Mammary epithelial cell (primary cell): ENCODE measurements at regions of chr3 and their contacts with region 1.

Region 1: GRCh38 chr3:100159331-100160153 is 45.2 kb upstream of the FILIP1L start:
- DNase-seq: peak; percentile 14
- H3K4me3 ChIP-seq: no peak overlapping the region
- H3K27ac ChIP-seq: no peak overlapping the region
- H3K4me1 ChIP-seq: peaks cover 16% of the 10 kb centered on the region
- H3K27me3 ChIP-seq: no peaks in the 10 kb centered on the region
- CTCF ChIP-seq: no peak

Region 2: DNA sequence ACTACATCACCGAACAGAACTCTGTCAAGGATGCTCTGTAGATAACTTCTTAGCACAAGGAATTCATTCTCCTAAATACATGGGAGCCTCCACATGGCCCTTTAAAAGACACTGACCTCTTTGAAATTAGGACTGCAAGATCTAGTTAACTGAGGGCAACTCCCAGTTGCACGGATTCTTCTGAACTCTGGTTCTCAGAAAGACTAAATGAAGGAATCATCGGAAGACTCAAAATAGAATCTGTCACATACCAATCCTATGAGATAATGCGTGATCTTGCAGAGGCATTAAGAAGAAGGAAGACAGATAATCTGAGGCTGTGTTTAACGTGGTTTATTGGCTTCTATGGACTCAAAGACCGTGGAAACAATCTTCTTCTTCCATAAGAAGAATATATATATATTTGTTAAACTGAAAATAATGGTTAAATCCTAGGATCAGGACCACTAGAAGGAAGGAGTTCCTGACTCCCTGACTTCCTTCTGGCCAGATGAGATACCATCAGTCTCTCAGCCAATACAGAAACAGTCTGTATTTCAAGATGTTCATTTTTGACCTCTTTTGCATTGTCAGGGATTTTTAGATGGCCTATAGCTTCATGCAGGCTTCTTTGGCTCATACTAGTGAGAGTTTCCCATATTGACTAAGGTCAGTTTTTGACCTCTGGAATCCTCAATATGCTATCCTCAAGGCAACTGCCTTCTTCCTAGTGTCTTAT is 67.3 kb after region 1 on chr3:
- CTCF ChIA-PET with region 1: no interaction called
- dilution Hi-C with region 1: loop called (anchors 5 kb)
- in situ Hi-C with region 1: no loop called
- intact Hi-C with region 1: no loop called
- DNase-seq: no peak
- H3K4me3 ChIP-seq: no peak overlapping the region
- H3K27ac ChIP-seq: no peak overlapping the region
- H3K4me1 ChIP-seq: no peaks in the 10 kb centered on the region
- H3K27me3 ChIP-seq: no peaks in the 10 kb centered on the region
- CTCF ChIP-seq: no peak